ENCODE measurements at regions of chr1 and their contacts with region 1.

Region 1: DNA sequence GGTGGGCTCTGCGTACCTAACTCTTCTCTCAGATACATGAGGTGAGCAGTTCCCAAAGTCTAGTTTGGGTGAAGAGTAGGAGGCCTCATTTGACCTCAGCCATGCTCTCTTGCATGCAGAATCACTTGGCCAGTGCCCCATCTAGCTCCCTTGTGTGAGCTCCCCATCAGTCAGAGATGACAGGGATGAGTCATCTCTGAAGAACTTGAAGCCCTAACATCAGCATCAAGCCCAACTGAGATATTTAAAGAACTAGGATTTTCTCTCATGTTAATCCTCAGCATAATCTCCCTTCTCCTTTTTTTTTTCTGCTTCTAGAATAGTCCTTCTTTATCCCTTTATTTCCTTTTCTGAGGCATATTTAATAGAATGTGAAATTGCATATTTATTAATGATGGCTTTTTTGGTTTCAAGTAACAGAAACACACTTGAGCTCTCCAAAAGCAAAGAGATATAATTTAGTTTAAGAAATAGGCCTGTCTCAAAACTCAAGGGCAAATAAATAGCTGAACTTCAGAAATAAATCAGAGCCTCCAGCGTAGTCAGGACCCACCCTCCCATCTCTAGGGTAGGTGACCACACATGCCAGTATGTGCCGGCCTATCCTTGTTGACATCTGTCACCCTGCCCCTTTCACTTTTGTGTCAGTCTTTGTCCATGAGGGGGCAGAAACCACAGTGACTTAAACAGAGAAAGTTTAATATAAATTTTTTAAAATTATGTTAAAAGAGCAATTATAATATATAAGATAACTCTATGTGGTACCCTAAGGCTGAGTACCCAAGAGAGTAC is 112.3 kb downstream of the TSEN15 start:
- DNase-seq: peak; percentile 20
- H3K4me3 Mint-ChIP-seq: no peak overlapping the region
- H3K27ac Mint-ChIP-seq: no peak overlapping the region
- H3K4me1 Mint-ChIP-seq: peaks cover 24% of the 10 kb centered on the region
- H3K27me3 Mint-ChIP-seq: peaks cover 12% of the 10 kb centered on the region

Region 2: GRCh38 chr1:182614796-182615454 is 1548.9 kb before region 1 on chr1:
- intact Hi-C with region 1: loop called (anchors 10 kb)
- DNase-seq: peak; percentile 34
- H3K4me3 Mint-ChIP-seq: peak overlapping the region; percentile 81
- H3K27ac Mint-ChIP-seq: peak overlapping the region; percentile 88
- H3K4me1 Mint-ChIP-seq: peaks cover 89% of the 10 kb centered on the region
- H3K27me3 Mint-ChIP-seq: peaks cover 16% of the 10 kb centered on the region

Region 3: DNA sequence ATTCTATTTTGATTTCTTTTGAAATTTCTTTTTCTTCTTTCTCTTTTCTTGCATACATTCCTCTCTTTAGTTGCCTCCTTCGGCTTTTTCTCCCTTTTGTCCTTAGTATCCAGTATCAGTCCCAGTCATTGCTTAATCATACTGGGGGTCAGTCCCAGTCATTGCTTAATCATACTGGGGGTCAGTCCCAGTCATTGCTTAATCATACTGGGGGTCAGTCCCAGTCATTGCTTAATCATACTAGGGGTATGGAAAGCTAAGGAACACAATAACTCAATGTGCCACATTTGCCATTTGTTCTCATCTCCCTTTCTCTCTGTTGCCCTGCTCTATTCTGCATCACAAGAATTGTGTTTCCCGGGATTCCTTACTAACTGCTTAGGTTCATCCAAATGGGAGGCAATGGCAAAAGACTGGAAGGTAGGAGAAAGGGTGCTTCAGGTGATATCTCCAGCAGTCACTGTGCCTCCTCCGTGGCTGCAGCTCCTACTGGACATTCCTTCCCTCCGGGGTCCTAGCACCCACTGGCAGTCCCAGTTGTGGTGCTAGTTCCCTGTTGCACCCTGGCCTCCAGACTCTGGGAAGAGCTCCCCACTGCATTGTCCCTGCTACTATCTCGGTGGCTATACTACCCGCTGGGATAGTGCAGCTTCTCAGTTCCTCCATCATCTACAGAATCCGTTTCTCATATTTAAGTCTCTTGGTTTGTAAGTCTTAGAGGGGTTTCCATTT is 1173.3 kb before region 1 on chr1:
- intact Hi-C with region 1: no loop called
- DNase-seq: no peak
- H3K4me3 Mint-ChIP-seq: no peak overlapping the region
- H3K27ac Mint-ChIP-seq: no peak overlapping the region
- H3K4me1 Mint-ChIP-seq: no peaks in the 10 kb centered on the region
- H3K27me3 Mint-ChIP-seq: peaks cover 12% of the 10 kb centered on the region

Region 4: GRCh38 chr1:183956559-183957188 is 207.2 kb before region 1 on chr1:
- intact Hi-C with region 1: loop called (anchors 1 kb)
- DNase-seq: peak; percentile 69
- H3K4me3 Mint-ChIP-seq: peak overlapping the region; percentile 62
- H3K27ac Mint-ChIP-seq: no peak overlapping the region
- H3K4me1 Mint-ChIP-seq: peaks cover 14% of the 10 kb centered on the region
- H3K27me3 Mint-ChIP-seq: no peaks in the 10 kb centered on the region

Region 5: DNA sequence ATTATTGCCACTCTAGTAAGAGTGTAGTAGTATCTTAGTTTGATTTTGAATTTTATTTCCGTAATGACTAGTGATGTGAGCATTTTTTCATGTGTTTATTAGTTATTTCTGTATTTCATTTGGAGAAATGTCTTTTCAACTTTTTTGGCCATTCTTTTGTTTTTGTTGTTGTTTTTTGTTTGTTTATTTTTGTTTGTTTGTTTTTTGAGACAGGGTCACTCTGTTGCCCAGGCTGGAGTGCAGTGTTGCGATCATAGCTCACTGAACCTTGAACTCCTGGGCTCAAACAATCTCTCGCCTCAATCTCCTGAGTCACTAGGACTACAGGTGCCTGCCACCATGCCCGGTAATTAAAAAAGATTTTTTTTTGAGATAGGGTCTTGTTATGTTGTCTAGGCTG is 36.4 kb before region 1 on chr1:
- intact Hi-C with region 1: loop called (anchors 2 kb)
- DNase-seq: no peak
- H3K4me3 Mint-ChIP-seq: no peak overlapping the region
- H3K27ac Mint-ChIP-seq: no peak overlapping the region
- H3K4me1 Mint-ChIP-seq: no peaks in the 10 kb centered on the region
- H3K27me3 Mint-ChIP-seq: peaks cover 2% of the 10 kb centered on the region

Region 6: GRCh38 chr1:184754476-184755225 is 590.8 kb after region 1 on chr1 and contains the start of gene EDEM3:
- intact Hi-C with region 1: loop called (anchors 2 kb)
- DNase-seq: peak; percentile 97
- H3K4me3 Mint-ChIP-seq: peak within 1 kb of the TSS; percentile 89
- H3K27ac Mint-ChIP-seq: peak within 1 kb of the TSS; percentile 77
- H3K4me1 Mint-ChIP-seq: peaks cover 29% of the 10 kb centered on the region
- H3K27me3 Mint-ChIP-seq: peaks cover 5% of the 10 kb centered on the region
- total RNA-seq, gene EDEM3: 23.8 and 28.5 TPM in 2 replicates

Region 7: DNA sequence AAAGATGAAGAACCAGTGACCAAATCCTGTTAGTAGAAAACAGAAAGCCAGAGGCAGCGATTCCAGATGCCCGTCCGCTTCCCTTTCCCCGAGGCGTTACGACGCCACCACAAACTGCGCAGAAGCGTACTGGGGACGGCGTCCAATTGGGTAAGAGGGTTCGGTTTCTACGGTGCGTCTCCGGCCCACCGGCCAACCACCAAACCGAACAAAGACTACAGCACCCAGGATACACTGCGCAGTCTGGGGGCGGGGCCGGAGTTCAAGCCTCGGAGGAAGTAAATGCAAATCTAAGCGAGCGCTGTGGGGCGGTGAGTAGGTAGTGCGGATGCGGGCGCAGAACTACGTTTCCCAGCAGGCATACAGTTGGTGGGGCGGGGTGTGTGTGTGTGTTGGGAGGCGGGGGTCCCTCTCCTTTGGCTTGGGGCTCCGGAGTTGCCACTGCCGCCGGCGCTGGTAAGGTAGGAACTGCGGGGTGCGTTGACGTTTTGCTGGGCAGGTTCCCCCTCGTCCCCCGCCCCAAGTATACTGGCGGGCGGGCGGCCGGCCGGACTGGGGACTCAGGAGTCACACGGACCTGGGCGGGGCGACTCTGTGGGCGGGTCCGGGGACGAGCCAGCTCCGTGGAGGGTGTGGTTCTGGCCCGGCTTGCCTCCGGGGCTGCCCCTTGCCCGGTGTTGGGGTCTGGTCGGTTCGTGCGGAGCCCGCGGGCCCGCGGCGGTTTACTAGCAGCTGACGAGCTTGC is 993.2 kb after region 1 on chr1 and contains the starts of genes SWT1 and TRMT1L:
- intact Hi-C with region 1: loop called (anchors 10 kb)
- DNase-seq: peak; percentile 98
- H3K4me3 Mint-ChIP-seq: peak within 1 kb of the TSS; percentile 98
- H3K27ac Mint-ChIP-seq: peak within 1 kb of the TSS; percentile 97
- H3K4me1 Mint-ChIP-seq: peaks cover 59% of the 10 kb centered on the region
- H3K27me3 Mint-ChIP-seq: no peaks in the 10 kb centered on the region
- total RNA-seq, gene SWT1: 1.3 and 2.3 TPM in 2 replicates
- total RNA-seq, gene TRMT1L: 16.7 and 21.9 TPM in 2 replicates

Measured in activated T-helper 1 cell treated with anti-CD3 and anti-CD28 coated beads, Interleukin-12 subunit alpha, Interleukin-12 subunit beta, Interleukin-2, Interleukin-4 antibody, amounts not matched to agents 30 ng/mL and 10 ng/mL and 1 ng/mL, durations not matched to agents 14 hours and 24 hours and 36 hours (primary cell).